ENCODE measurements at regions of chr20 and their contacts with region 1.

Region 1: GRCh38 chr20:50575847-50576720 is 65.9 kb downstream of the PTPN1 start:
- DNase-seq: peak; percentile 80
- H3K4me3 Mint-ChIP-seq: no peak overlapping the region
- H3K27ac Mint-ChIP-seq: peak overlapping the region; percentile 54
- H3K4me1 Mint-ChIP-seq: peaks cover 41% of the 10 kb centered on the region
- H3K27me3 Mint-ChIP-seq: no peaks in the 10 kb centered on the region

Region 2: GRCh38 chr20:50434653-50435396 is 141.3 kb before region 1 on chr20:
- CTCF ChIA-PET with region 1: no interaction called
- intact Hi-C with region 1: no loop called
- DNase-seq: no peak
- H3K4me3 Mint-ChIP-seq: no peak overlapping the region
- H3K27ac Mint-ChIP-seq: no peak overlapping the region
- H3K4me1 Mint-ChIP-seq: no peaks in the 10 kb centered on the region
- H3K27me3 Mint-ChIP-seq: peaks cover 3% of the 10 kb centered on the region

Region 3: GRCh38 chr20:50467718-50468356 is 108.2 kb before region 1 on chr20:
- CTCF ChIA-PET with region 1: interaction called, 24 read pairs
- intact Hi-C with region 1: no loop called
- DNase-seq: peak; percentile 50
- H3K4me3 Mint-ChIP-seq: no peak overlapping the region
- H3K27ac Mint-ChIP-seq: no peak overlapping the region
- H3K4me1 Mint-ChIP-seq: peaks cover 17% of the 10 kb centered on the region
- H3K27me3 Mint-ChIP-seq: no peaks in the 10 kb centered on the region

Region 4: DNA sequence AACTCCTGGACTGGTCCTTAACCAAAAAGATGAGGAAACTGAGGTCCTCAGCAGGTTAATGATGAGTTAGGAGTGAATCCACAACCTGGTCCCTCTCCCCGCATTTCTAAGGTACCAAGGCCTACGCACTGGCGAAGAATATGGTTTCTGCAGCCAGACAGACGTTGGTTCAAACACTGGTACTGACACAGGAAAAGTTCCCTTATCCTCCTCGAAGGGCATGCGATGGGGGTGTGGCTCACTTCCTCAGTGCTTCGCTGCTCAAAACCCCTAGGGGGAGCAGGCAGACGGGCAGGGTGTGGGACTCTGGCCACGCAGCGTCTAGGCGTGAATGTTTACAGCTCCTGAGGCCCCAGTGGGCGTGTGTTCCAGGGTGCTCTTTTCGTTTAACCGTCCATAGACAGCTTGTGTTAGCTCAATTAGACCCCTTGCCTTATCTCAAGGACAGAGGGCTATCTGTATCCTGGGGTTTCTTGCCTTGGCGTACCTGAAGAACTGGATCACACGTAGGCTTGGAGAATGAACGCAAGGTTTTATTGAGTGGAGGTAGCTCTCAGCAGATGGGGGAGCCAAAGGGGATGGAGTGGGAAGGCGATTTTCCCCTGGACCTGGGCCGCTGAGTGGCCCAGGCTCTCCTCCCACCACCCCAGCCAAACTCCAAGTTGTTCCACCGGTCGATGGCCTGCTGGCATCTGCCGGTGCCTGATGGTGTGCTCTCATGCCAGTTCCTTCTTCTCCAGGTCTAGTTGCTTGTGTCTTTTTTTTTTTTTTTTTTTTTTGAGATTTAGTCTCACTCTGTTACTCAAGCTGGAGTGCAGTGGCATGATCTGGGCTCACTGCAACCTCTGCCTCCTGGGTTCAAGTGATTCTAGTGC is 97.7 kb before region 1 on chr20:
- CTCF ChIA-PET with region 1: interaction called, 87 read pairs
- intact Hi-C with region 1: loop called (anchors 1 kb)
- DNase-seq: peak; percentile 89
- H3K4me3 Mint-ChIP-seq: no peak overlapping the region
- H3K27ac Mint-ChIP-seq: no peak overlapping the region
- H3K4me1 Mint-ChIP-seq: peaks cover 26% of the 10 kb centered on the region
- H3K27me3 Mint-ChIP-seq: no peaks in the 10 kb centered on the region

Region 5: DNA sequence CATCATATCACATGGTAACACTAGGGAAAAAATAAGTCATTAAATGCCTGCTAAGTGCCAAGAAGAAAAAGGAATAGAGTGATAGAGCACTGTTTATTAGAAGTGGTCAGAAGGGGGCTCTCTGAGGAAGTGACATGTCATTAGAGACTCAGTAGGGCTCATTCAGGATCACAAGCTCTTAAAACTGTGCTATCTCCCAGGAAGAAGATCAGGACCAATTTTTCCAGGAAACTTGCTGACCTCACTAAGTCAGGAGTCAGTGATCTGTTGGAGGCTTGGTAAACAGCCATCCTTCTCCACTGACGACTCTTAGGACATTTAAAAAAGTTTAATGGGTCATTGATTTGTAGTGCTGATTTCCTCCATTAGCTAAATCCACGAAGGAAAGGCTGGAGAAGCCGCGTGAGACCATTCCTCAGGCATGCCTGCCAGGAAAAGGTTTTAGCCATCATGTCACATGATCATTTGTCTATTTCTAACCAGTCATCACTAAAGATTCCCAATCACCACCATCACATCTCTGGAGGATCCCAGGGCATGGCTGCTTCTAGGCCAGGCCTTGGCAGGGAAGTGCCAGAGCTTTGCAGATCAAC is 71.8 kb before region 1 on chr20:
- CTCF ChIA-PET with region 1: interaction called, 51 read pairs
- intact Hi-C with region 1: no loop called
- DNase-seq: no peak
- H3K4me3 Mint-ChIP-seq: no peak overlapping the region
- H3K27ac Mint-ChIP-seq: no peak overlapping the region
- H3K4me1 Mint-ChIP-seq: peaks cover 15% of the 10 kb centered on the region
- H3K27me3 Mint-ChIP-seq: no peaks in the 10 kb centered on the region

Region 6: GRCh38 chr20:50588034-50588611 is 12.0 kb after region 1 on chr20:
- CTCF ChIA-PET with region 1: interaction called, 10 read pairs
- intact Hi-C with region 1: no loop called
- DNase-seq: peak; percentile 88
- H3K4me3 Mint-ChIP-seq: no peak overlapping the region
- H3K27ac Mint-ChIP-seq: peak overlapping the region; percentile 65
- H3K4me1 Mint-ChIP-seq: no peaks in the 10 kb centered on the region
- H3K27me3 Mint-ChIP-seq: no peaks in the 10 kb centered on the region

Measured in activated naive CD4-positive, alpha-beta T cell treated with anti-CD3 and anti-CD28 coated beads for 36 hours (primary cell).